Common myeloid progenitor, CD34-positive (primary cell): ENCODE measurements at regions of chr3 and their contacts with region 1.

Region 1: DNA sequence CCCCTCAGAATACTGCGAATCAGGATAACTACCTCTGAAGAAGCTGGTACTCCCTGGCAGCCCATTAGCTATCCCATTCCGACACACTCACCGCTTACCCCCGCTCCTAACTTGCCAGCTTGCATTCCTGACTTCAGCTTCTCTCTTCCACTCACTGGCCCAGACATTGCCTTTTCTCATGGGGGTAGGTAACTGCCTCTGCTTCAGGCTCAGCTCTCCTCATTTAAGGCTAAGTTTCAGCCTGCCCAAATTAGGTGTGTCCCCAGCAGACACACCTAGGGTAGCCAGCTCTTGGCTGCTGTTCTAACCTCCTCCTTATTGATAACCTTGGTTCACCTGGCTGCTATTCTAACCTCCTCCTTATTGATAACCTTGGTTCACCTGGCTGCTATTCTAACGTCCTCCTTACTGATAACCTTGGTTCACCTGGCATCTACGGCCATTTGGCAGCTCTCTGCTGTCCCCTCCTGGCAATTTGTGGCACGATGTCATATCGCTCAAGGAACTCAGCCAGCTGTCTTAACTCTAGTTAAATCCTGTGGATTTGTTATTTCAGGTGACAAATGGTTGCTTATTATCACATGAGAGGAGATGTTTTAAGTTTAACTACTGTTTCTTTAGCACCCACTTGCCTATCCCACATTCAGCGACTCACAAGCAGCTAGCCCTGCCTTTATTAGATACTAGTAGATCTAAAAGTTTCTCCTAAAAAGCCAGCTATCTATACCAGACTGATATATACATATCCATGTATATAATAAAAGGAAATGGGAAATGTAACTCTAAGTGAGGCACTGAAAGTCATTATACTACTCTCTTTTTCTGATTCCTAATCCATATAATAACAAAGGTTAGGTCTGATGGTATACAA is 106.5 kb upstream of the ACP3 start:
- DNase-seq: peak; percentile 22 to 46 (median 43)
- H3K4me3 ChIP-seq: no peak overlapping the region
- H3K27ac ChIP-seq: no peak overlapping the region
- H3K4me1 ChIP-seq: no peaks in the 10 kb centered on the region
- H3K27me3 ChIP-seq: no peaks in the 10 kb centered on the region

Region 2: GRCh38 chr3:132038198-132038825 is 172.4 kb before region 1 on chr3:
- CTCF ChIA-PET with region 1: interaction called, 33 read pairs
- POLR2A ChIA-PET with region 1: no interaction called
- DNase-seq: peak in 2 of 3 donors; percentile 21 to 33
- H3K4me3 ChIP-seq: no peak overlapping the region
- H3K27ac ChIP-seq: no peak overlapping the region
- H3K4me1 ChIP-seq: peaks cover 0 to 13% (median 7%) of the 10 kb centered on the region in 4 experiments
- H3K27me3 ChIP-seq: peaks cover 2 to 33% (median 13%) of the 10 kb centered on the region in 5 experiments

Region 3: DNA sequence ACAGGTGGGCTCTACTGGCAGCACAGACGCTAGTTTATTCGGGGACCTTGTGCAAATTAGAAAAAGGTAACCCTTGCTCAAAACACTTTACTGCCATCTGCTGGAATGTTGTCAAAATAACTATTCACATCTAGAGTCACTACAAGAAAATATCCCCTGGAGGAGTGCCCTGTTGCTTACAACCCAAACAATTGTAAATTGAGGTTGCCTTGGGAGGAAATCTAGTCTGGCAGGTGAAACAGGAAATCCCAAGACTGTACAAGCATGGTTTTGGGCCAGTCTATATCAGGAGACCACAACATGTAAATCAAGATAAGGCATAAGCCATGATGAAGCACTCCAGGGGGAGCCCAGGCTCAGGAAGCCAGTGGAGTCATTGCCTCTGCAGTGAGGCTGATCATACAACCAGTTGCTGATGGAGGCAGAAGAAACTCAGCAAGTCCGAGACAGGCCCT is 30.3 kb before region 1 on chr3:
- CTCF ChIA-PET with region 1: interaction called, 12 read pairs
- POLR2A ChIA-PET with region 1: interaction called, 4 read pairs
- DNase-seq: peak; percentile 82 to 93 (median 89)
- H3K4me3 ChIP-seq: peak overlapping the region in 1 of 7 experiments; percentile 34
- H3K27ac ChIP-seq: no peak overlapping the region
- H3K4me1 ChIP-seq: peaks cover 0 to 14% (median 5%) of the 10 kb centered on the region in 4 experiments
- H3K27me3 ChIP-seq: peaks cover 0 to 6% (median 0%) of the 10 kb centered on the region in 5 experiments

Region 4: DNA sequence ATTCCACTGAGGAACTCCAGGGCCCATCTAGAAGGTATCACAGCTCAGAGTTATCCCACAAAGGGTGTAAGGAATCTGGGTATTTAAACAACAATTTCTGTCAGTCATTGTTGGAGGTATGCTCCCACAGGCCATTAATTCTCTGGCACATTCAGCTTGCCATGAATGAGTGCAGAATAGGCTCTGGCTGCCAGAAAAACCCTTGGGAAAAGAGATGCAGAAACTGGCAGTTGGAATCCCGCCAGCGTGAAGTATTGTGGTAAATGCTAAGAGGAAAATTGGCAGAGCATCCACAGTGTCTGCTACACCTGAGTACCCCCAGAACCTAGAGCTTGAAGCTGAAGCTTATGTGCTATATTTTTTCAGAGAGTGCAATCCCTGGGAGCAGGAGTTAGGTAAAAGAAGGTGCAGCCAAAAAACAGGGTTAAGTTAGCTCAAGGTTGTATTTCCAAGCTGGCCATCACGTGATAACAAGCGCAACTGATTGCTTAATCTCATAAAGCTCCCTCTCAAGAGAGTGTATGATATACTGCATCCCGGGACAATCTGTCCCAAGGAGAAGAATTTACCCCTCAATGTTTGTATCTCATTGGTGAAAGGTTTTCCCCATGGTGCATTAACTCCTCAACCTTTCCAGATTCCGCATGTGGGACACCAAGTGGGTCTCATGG is 12.3 kb after region 1 on chr3:
- CTCF ChIA-PET with region 1: interaction called, 36 read pairs
- POLR2A ChIA-PET with region 1: no interaction called
- DNase-seq: no peak
- H3K4me3 ChIP-seq: no peak overlapping the region
- H3K27ac ChIP-seq: no peak overlapping the region
- H3K4me1 ChIP-seq: no peaks in the 10 kb centered on the region
- H3K27me3 ChIP-seq: no peaks in the 10 kb centered on the region